HCT116 (cell line): ENCODE measurements at regions of chr5 and their contacts with region 1.

Region 1: GRCh38 chr5:34474573-34475021 is 181.5 kb upstream of the RAI14 start:
- DNase-seq: peak; percentile 38
- ATAC-seq: peak; percentile 90
- H3K4me3 ChIP-seq: no peak overlapping the region
- H3K27ac ChIP-seq: no peak overlapping the region
- H3K4me1 ChIP-seq: no peaks in the 10 kb centered on the region
- H3K27me3 ChIP-seq: peaks cover 4% of the 10 kb centered on the region; the same call in 1 of the 2 replicates
- CTCF ChIP-seq: peak; percentile 63 to 94 (median 87); a peak in 5 of 6 replicates
- POLR2A ChIP-seq: no peak
- RAD21 ChIP-seq: peak; percentile 78

Region 2: DNA sequence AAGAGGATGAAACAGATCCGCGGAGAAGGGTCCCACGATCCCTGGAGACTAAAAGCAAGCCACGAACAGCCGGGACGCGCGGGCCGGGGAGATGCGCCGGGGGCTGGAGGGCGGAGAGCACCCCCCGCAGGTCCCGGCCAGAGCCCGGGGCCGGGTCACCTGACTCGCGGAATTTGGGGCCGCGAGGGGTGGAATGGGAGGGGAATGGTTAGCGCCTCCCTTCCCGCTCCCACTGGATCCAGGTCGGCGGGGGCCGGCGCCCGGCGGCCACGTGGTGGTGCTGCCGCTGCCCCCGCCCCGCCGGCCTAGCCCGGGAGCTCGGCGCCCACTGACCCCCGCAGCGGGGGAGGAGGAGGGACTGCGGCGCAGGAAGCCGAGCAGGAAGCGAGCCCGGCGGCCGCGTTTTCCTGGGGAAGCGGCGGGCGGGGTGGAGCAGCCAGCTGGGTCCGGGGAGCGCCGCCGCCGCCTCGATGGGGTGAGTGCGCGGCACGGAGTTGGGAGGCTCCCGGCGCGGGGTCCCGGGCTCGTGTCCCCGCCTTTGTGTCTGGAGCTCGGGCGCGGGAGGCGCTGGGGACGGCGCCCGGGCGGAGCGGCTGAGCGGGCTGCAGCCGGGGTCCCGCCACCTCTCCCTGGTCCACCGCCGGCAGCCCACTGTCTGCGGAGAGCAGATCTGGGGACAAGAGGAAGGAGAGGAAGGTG is 181.6 kb after region 1 on chr5 and contains the start of gene RAI14:
- CTCF ChIA-PET with region 1: no interaction called
- POLR2A ChIA-PET with region 1: no interaction called
- RAD21 ChIA-PET with region 1: no interaction called
- intact Hi-C with region 1: no loop called
- DNase-seq: peak; percentile 23
- ATAC-seq: peak; percentile 90
- H3K4me3 ChIP-seq: peak within 1 kb of the TSS; percentile 74 to 89
- H3K27ac ChIP-seq: peak within 1 kb of the TSS; percentile 78
- H3K4me1 ChIP-seq: peaks cover 13 to 24% of the 10 kb centered on the region in 2 experiments
- H3K27me3 ChIP-seq: no peaks in the 10 kb centered on the region; the same call in 1 of the 2 replicates
- CTCF ChIP-seq: no peak
- POLR2A ChIP-seq: no peak
- RAD21 ChIP-seq: no peak
- total RNA-seq, gene RAI14: 47.9 TPM

Region 3: DNA sequence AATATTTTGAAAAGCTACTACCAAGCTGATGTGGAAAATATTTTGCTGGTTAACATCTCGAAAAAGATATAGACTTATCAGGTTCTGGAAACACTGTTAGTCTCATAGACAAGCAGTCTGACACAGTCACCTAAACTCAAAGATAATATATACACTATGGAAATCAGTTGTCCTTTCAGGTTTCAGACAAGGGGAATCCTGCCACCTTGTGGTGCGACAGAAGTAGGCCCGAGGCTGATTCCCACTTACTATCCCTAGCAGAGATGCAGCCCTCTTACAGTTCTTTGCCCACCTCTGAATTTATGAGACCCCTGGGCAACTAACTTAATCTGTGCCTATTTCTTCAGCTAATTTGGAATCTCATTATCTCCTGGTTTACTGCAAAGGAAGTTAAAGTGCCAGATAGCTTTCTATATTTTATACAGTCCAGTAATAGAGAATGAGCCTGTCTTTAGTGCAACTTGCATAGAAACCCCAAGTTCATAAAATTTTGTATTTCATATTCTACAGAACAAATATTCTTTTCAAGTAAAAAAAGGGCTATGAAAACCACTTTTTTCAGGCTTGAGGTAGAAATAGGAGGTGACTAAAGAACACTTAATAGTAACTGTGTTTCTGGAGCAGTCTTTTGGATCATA is 423.8 kb after region 1 on chr5:
- CTCF ChIA-PET with region 1: interaction called, 6 read pairs
- POLR2A ChIA-PET with region 1: no interaction called
- RAD21 ChIA-PET with region 1: no interaction called
- intact Hi-C with region 1: loop called (anchors 1 kb)
- DNase-seq: peak; percentile 44
- ATAC-seq: peak; percentile 87
- H3K4me3 ChIP-seq: no peak overlapping the region
- H3K27ac ChIP-seq: no peak overlapping the region
- H3K4me1 ChIP-seq: no peaks in the 10 kb centered on the region
- H3K27me3 ChIP-seq: no peaks in the 10 kb centered on the region
- CTCF ChIP-seq: peak; percentile 76 to 90 (median 88); a peak in 5 of 6 replicates
- POLR2A ChIP-seq: no peak
- RAD21 ChIP-seq: peak; percentile 89

Region 4: GRCh38 chr5:35003018-35003957 is 528.7 kb after region 1 on chr5:
- CTCF ChIA-PET with region 1: interaction called, 7 read pairs
- POLR2A ChIA-PET with region 1: no interaction called
- RAD21 ChIA-PET with region 1: no interaction called
- intact Hi-C with region 1: loop called (anchors 1 kb)
- DNase-seq: peak; percentile 29
- ATAC-seq: peak; percentile 86
- H3K4me3 ChIP-seq: no peak overlapping the region
- H3K27ac ChIP-seq: no peak overlapping the region
- H3K4me1 ChIP-seq: no peaks in the 10 kb centered on the region; a peak in 1 of 4 replicates
- H3K27me3 ChIP-seq: 0 out of 2 replicates have a peak, but pooled peaks cover 15% of the 10 kb centered on the region
- CTCF ChIP-seq: peak; percentile 63 to 92 (median 91); a peak in 5 of 6 replicates
- POLR2A ChIP-seq: no peak
- RAD21 ChIP-seq: peak; percentile 77

Region 5: GRCh38 chr5:35182541-35183535 is 708.2 kb after region 1 on chr5:
- CTCF ChIA-PET with region 1: no interaction called
- POLR2A ChIA-PET with region 1: no interaction called
- RAD21 ChIA-PET with region 1: no interaction called
- intact Hi-C with region 1: loop called (anchors 2 kb)
- DNase-seq: peak; percentile 10
- ATAC-seq: peak; percentile 85
- H3K4me3 ChIP-seq: no peak overlapping the region
- H3K27ac ChIP-seq: no peak overlapping the region
- H3K4me1 ChIP-seq: no peaks in the 10 kb centered on the region
- H3K27me3 ChIP-seq: peaks cover 13% of the 10 kb centered on the region; the same call in 1 of the 2 replicates
- CTCF ChIP-seq: peak; percentile 33 to 67 (median 61); a peak in 5 of 6 replicates
- POLR2A ChIP-seq: no peak
- RAD21 ChIP-seq: peak; percentile 43

Region 6: DNA sequence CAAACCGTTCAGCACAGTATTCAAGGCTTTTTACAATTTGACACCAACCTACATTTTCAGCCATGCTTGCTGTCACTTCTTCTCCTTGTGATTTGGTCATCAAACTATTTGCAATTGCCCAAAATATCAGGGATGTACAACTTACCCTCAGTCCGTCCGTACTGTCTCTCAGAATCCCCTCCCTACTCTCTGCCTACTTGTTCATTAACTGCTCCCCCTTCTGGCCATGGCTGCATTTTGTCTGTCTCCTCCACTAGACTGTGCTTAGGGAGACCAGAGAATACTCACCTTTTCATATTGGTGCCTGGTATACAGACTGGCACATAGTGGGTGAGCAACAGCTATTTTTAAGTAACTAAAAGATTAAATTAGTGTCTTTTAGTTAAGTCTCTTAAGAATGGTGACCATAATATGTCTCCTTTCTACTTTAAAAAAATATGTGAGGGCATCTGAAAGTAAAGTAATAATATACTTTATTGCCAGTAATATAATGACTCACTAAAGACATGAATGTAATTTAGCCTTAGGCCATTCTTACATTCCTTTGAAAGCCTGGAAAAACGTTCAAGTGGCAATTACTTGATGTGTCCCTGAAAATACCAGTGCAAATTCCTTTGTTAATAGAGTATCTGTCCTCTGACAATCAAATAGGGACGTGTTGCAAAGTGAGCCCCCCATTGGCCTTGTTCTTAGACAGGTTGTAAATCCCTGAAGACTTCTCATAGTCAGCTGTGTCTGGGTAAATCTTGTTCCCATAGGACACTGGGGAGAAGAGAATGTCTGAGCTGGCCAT is 727.9 kb after region 1 on chr5:
- CTCF ChIA-PET with region 1: no interaction called
- POLR2A ChIA-PET with region 1: no interaction called
- RAD21 ChIA-PET with region 1: no interaction called
- intact Hi-C with region 1: loop called (anchors 5 kb)
- DNase-seq: peak; percentile 36
- ATAC-seq: peak; percentile 91
- H3K4me3 ChIP-seq: no peak overlapping the region
- H3K27ac ChIP-seq: no peak overlapping the region
- H3K4me1 ChIP-seq: no peaks in the 10 kb centered on the region
- H3K27me3 ChIP-seq: peaks cover 33% of the 10 kb centered on the region
- CTCF ChIP-seq: peak; percentile 22 to 65 (median 62); a peak in 5 of 6 replicates
- POLR2A ChIP-seq: no peak
- RAD21 ChIP-seq: peak; percentile 19; the same call in 1 of the 2 replicates

Region 7: DNA sequence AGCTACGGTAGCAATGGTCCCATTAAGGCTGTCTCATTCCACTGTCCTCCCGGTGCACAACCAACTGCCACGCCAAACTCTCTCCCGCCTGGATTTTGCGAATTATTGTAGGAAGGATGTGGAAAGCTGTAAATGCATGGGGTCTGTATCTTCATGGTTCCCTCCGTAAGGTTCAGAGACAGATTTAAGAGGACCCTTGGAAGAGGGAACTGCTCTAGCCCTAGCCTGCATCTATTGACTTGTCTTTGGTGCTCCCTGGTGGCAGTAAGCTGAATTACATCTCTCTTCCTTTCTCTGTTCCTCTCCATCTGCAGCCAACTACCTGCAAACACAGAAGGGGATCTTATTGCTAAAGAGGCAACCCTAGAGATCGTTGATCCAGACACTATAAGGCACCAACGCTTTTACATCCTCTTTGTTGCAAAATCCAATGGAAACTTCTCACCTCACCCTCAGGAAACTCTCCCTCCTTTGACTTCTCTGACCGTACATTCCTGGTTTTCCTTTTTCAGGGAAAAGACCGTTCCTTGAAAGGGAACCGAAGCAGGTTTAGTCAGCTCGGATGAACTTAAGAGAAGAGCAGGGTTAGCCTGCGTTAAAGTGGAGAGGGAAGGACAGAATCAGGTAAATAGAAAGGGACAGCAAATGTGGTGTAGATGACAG is 1451.9 kb after region 1 on chr5:
- CTCF ChIA-PET with region 1: no interaction called
- POLR2A ChIA-PET with region 1: no interaction called
- RAD21 ChIA-PET with region 1: no interaction called
- intact Hi-C with region 1: loop called (anchors 5 kb)
- DNase-seq: peak; percentile 28
- ATAC-seq: peak; percentile 80
- H3K4me3 ChIP-seq: no peak overlapping the region
- H3K27ac ChIP-seq: no peak overlapping the region
- H3K4me1 ChIP-seq: no peaks in the 10 kb centered on the region
- H3K27me3 ChIP-seq: peaks cover 46% of the 10 kb centered on the region
- CTCF ChIP-seq: peak; percentile 49 to 85 (median 71); a peak in 5 of 6 replicates
- POLR2A ChIP-seq: no peak
- RAD21 ChIP-seq: peak; percentile 78